Mucosa of descending colon (tissue), 3 donors: ENCODE measurements at regions of chr17 and their contacts with region 1.

Region 1: DNA sequence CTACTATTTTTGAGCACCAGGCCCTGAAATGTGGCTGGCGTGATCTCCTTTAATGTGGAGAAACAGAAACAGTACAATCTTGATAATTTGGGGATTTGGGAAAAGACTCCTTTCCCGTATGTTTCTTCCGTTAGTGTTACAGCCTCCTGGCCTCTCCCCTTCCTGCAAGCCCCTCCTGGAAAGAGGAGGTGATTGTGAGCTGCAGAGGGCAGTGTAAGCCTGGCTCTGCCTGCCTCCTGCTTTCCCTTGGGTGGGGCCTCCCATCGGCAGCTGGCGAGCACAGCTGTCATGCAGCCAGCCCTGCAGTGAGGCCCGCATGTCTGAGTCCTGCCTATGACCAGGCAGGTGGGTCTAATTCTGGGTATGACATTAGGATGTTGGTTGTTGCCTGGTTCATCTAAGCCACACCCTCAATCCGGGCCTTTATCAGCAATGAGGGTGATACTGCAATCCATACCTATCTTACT is 48.7 kb upstream of the WSB1 start:
- DNase-seq: peak; percentile 87 to 89 (median 87)
- ATAC-seq: peak; percentile 88
- H3K4me3 ChIP-seq: no peak overlapping the region
- H3K4me1 ChIP-seq: peaks cover 30% of the 10 kb centered on the region
- CTCF ChIP-seq: peak; percentile 33

Region 2: GRCh38 chr17:27293898-27294688 is 48.8 kb after region 1 on chr17 and contains the start of gene WSB1:
- intact Hi-C with region 1: loop called in 1 of 2 experiments (anchors 10 kb)
- DNase-seq: peak; percentile 95 to 96 (median 96)
- ATAC-seq: peak; percentile 93
- H3K4me3 ChIP-seq: peak within 1 kb of the TSS; percentile 81
- H3K4me1 ChIP-seq: peaks cover 19% of the 10 kb centered on the region
- CTCF ChIP-seq: no peak
- total RNA-seq, gene WSB1: 115 to 149 (median 137) TPM

Region 3: GRCh38 chr17:27332485-27333409 is 87.5 kb after region 1 on chr17:
- intact Hi-C with region 1: loop called (anchors 5 kb)
- DNase-seq: peak; percentile 96 to 99 (median 98)
- ATAC-seq: peak; percentile 97
- H3K4me3 ChIP-seq: no peak overlapping the region
- H3K4me1 ChIP-seq: peaks cover 10% of the 10 kb centered on the region
- CTCF ChIP-seq: peak; percentile 83